ENCODE measurements at regions of chr2 and their contacts with region 1.

Region 1: GRCh38 chr2:44087036-44087713 is 81.5 kb upstream of the PPM1B start:
- DNase-seq: peak; percentile 80 to 92 (median 88)
- ATAC-seq: peak; percentile 95 to 97 (median 96)
- H3K4me3 ChIP-seq: peak overlapping the region in 10 of 12 donors; percentile 7 to 59 (median 44)
- H3K27ac ChIP-seq: peak overlapping the region in 9 of 12 donors; percentile 44 to 82 (median 55)
- H3K4me1 ChIP-seq: peaks cover 0 to 12% (median 5%) of the 10 kb centered on the region in 12 donors
- H3K27me3 ChIP-seq: no peaks in the 10 kb centered on the region
- CTCF ChIP-seq: peak; percentile 93 to 99 (median 98)
- POLR2A ChIP-seq: no peak

Region 2: GRCh38 chr2:44226753-44227152 is 139.6 kb after region 1 on chr2:
- intact Hi-C with region 1: loop called in 1 of 10 experiments (anchors 10 kb)
- DNase-seq: no peak
- ATAC-seq: no peak
- H3K4me3 ChIP-seq: no peak overlapping the region
- H3K27ac ChIP-seq: no peak overlapping the region
- H3K4me1 ChIP-seq: no peaks in the 10 kb centered on the region
- H3K27me3 ChIP-seq: no peaks in the 10 kb centered on the region
- CTCF ChIP-seq: no peak
- POLR2A ChIP-seq: no peak

Region 3: GRCh38 chr2:44291281-44292248 is 204.4 kb after region 1 on chr2:
- intact Hi-C with region 1: loop called in 4 of 10 experiments (anchors 5 to 10 kb)
- DNase-seq: peak in 1 of 5 donors; percentile 7
- ATAC-seq: peak in 3 of 4 donors; percentile 61 to 68 (median 66)
- H3K4me3 ChIP-seq: no peak overlapping the region
- H3K27ac ChIP-seq: no peak overlapping the region
- H3K4me1 ChIP-seq: peaks cover 0 to 9% (median 0%) of the 10 kb centered on the region in 12 donors
- H3K27me3 ChIP-seq: no peaks in the 10 kb centered on the region
- CTCF ChIP-seq: peak; percentile 10 to 56 (median 38)
- POLR2A ChIP-seq: no peak

Region 4: GRCh38 chr2:44342854-44343253 is 255.7 kb after region 1 on chr2:
- intact Hi-C with region 1: loop called in 2 of 10 experiments (anchors 5 to 10 kb)
- DNase-seq: no peak
- ATAC-seq: no peak
- H3K4me3 ChIP-seq: no peak overlapping the region
- H3K27ac ChIP-seq: no peak overlapping the region
- H3K4me1 ChIP-seq: peaks cover 0 to 15% (median 4%) of the 10 kb centered on the region in 12 donors
- H3K27me3 ChIP-seq: no peaks in the 10 kb centered on the region
- CTCF ChIP-seq: peak in 9 of 12 donors; percentile 10 to 50 (median 37)
- POLR2A ChIP-seq: no peak

Region 5: DNA sequence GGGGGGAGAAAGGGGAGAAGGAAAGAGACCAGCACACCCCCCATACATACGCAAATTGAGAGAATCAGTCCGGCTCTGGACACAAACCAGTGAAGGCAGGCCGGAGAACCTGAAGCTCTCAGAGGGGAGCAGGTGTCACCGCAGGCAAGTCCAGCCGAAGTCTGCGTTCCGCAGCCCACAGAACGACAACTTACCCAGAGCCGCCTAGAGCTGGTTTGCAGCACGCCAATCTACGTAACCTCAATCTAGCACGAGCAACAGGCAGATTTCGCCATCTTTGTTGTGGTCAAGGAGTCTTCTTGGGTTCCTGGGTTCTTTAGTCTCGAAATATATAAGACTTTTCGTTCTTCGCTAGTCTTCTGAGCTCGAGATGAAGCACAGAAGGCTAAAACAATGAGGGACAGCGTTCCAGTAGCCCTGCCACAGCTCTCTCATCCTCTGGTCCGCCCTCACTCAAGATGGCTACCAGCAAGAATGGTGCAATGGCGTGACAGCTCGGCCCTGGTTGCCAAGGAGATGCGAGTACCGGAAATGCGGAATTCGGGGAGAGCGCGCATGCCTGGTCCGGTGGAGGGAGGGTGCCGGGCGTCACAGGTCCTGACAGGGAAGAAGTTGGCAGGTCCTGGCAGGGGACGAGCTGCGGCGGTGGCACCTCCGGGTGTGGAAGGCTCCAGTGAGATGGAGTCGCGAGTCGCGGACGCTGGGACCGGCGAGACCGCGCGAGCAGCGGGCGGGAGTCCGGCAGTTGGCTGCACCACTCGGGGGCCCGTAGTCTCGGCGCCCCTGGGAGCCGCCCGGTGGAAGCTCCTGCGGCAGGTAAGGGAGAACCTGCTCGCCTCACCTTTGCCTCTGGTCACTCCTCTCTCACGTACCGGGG is 274.4 kb after region 1 on chr2 and contains the starts of genes CAMKMT and PREPL:
- intact Hi-C with region 1: loop called in 2 of 10 experiments (anchors 5 to 10 kb)
- DNase-seq: peak; percentile 98 to 99 (median 99)
- ATAC-seq: peak; percentile 96 to 98 (median 96)
- H3K4me3 ChIP-seq: peak within 1 kb of the TSS; percentile 60 to 97 (median 89)
- H3K27ac ChIP-seq: peak within 1 kb of the TSS; percentile 89 to 99 (median 96)
- H3K4me1 ChIP-seq: peaks cover 0 to 45% (median 32%) of the 10 kb centered on the region in 12 donors
- H3K27me3 ChIP-seq: no peaks in the 10 kb centered on the region
- CTCF ChIP-seq: no peak
- POLR2A ChIP-seq: peak in 1 of 2 donors; percentile 50
- total RNA-seq, gene CAMKMT: 2.5 to 10.1 (median 4.3) TPM
- total RNA-seq, gene PREPL: 62.4 to 120 (median 73.9) TPM